ENCODE measurements at regions of chr4 and their contacts with region 1.

Region 1: GRCh38 chr4:140743194-140743931 is 12.8 kb downstream of the TBC1D9 start:
- DNase-seq: peak; percentile 39
- CTCF ChIP-seq: peak; percentile 42

Region 2: DNA sequence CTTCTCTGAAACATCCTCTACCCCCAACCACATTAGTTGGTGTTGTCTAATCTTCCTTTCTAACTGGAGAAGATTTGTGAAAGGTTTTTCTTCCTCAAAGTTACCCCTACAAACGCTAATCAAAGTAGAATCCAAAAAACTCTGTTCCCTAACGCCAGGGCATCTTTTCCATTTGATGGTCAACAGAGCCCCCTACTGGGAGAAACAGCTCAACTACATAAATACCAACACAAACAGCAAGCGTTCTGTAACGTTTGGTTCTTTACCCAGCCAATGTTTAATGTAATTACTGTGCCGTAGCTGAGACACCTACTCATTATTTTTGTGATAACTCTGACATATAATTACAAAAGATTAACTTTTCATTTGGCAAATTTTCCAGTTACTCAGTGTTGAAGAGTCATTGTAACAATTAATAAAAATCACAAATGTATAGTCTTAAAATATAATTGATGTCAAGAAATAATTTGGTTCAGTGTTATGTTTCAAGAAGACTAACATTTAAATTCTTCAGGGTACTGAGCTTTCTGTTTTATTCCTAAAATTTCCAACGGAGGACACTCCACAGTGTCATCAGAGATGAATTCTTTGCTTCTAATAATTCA is 107.8 kb after region 1 on chr4:
- CTCF ChIA-PET with region 1: interaction called, 16 read pairs
- POLR2A ChIA-PET with region 1: no interaction called
- DNase-seq: peak; percentile 64
- CTCF ChIP-seq: peak; percentile 75

Measured in GM10248 (cell line).